ENCODE measurements at regions of chr2 and their contacts with region 1.

Region 1: DNA sequence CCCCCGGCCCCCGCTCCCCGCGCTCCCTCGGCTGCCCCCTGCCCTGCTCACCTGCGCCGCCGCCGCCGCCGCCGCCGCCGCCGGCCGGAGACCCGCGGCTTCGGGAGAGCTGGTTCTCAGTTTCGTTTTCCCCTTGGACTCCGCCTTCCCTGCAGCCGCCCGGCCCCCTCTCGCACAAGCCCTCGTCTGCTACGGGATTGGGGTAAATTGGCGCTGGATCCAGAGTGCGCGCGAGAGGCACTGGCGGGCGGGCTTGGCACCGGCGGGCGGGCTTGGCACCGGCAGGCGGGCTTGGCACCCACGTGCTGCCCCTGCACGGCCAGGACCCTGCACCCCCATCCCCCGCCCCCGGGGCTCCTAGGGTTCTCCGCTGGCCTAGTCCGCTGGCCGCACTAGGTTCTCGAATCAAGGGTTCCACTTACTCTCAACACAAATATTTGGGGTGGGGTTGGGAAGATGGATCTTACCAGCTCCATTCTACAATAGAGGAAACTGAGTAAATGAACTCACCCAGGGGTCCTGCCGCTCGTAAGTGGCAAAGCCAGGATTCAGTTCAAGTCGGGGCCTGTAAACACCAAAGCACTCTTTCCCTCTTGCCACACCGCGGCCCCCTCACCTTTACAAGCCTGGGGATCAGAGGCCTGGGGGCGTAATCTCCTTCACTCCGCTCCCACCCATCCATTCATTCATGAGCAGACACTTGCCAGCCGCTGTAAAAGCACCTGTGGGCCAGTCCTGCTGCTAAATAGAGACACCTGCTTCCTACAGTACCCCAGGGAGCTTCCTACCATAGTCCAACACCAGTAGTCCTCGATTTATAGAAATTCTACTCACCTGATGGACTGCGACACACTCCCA is at the start of gene EIF2AK2:
- DNase-seq: no peak
- H3K4me3 ChIP-seq: peak within 1 kb of the TSS; percentile 76
- H3K27me3 ChIP-seq: no peaks in the 10 kb centered on the region
- CTCF ChIP-seq: no peak
- polyA plus RNA-seq, gene EIF2AK2: 9.3 and 18.6 TPM in 2 replicates

Region 2: GRCh38 chr2:37083873-37084794 is 73.0 kb before region 1 on chr2 and contains the starts of genes GPATCH11 and HEATR5B:
- CTCF ChIA-PET with region 1: no interaction called
- POLR2A ChIA-PET with region 1: interaction called, 15 read pairs
- DNase-seq: peak; percentile 93
- H3K4me3 ChIP-seq: peak within 1 kb of the TSS; percentile 72
- H3K27me3 ChIP-seq: no peaks in the 10 kb centered on the region
- CTCF ChIP-seq: no peak
- polyA plus RNA-seq, gene GPATCH11: 2.0 and 4.0 TPM in 2 replicates
- polyA plus RNA-seq, gene HEATR5B: 10.4 and 17.3 TPM in 2 replicates

Region 3: DNA sequence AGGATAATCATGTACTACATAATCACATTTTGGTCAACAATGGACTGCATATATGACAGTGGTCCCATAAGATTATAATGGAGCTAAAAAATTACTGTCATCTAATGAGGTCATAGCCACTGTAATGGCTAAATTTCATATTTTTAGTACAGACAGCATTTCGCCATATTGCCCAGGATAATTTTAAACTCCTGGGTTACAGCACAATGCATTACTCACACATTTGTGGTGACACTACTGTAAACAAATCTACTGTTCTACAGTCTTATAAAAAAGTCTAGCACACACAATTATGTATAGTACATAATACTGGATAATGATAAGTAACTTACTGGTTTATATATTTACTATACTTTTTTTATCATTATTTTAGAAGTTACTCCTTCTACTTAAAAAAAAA is 13.1 kb before region 1 on chr2:
- CTCF ChIA-PET with region 1: interaction called, 3 read pairs
- POLR2A ChIA-PET with region 1: interaction called, 17 read pairs
- DNase-seq: no peak
- H3K4me3 ChIP-seq: no peak overlapping the region
- H3K27me3 ChIP-seq: no peaks in the 10 kb centered on the region
- CTCF ChIP-seq: no peak

Measured in BJ (cell line).